ENCODE measurements at regions of chr4 and their contacts with region 1.

Region 1: DNA sequence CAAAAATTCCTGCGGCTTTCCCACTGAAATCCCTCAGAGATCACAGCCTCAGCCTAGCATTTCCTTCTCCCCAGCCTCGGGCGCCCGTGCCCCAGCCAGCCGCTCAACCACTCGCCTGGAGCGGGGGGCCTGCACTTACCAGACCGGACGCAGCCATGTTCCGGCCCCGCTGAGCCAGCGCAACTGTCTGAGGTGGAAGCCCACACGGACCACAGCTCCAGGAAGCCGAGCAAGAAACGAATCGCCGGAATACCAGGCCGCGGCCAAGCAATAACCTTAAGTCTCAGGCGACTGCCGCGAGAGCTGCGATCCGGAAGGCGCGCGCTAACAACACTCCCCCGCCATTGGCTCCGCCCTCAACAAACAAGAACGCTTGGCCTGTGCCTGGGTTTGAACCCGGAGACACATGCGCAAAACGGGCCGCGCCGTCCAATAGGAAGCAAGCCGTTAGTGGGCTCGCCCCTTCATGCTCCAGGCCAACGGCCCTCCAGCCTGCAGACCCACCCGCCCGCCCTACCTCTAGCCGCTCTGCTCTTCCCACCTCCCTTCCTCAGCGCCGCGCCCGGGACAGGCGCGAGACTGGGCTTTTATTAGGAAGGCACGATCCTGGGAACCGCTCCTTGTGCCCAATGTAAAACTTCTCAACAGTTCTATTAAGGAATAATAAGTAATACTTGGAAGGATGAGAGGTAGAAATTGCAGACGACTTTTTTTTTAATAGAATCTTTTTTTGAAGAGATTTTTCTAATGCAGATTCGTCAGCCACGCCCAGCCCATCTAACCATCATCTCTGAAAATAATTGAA is at the start of gene CENPC:
- DNase-seq: peak; percentile 93
- H3K4me3 ChIP-seq: peak within 1 kb of the TSS; percentile 95
- H3K27me3 ChIP-seq: no peaks in the 10 kb centered on the region
- CTCF ChIP-seq: no peak
- polyA plus RNA-seq, gene CENPC: 3.6 and 6.4 TPM in 2 replicates

Region 2: DNA sequence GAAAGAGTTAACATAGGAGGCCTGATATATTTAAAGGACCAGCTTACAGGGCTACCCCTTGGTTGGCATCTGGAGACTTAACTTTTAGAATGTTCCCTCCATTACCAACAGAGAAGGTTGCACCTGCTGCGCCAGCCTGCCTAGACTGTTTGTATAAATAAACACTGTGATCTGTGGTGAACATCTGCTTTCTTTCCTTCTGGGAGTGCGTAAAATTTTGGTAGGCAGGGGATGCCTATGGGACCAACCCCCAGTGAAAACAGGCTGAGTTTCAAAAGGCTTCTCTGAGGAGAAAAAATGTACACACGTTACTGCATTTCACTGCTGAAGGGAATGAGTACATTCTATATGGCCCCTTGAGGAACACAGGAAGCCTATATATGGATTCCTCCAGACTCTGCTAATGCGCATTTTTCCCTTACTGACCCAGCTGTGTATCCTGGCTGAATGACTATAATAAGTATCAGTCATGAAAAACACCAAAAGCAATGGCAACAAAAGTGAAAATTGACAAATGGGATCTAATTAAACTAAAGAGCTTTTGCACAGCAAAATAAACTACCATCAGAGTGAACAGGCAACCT is 13.9 kb before region 1 on chr4:
- CTCF ChIA-PET with region 1: no interaction called
- POLR2A ChIA-PET with region 1: no interaction called
- DNase-seq: no peak
- H3K4me3 ChIP-seq: no peak overlapping the region
- H3K27me3 ChIP-seq: no peaks in the 10 kb centered on the region
- CTCF ChIP-seq: no peak

Region 3: DNA sequence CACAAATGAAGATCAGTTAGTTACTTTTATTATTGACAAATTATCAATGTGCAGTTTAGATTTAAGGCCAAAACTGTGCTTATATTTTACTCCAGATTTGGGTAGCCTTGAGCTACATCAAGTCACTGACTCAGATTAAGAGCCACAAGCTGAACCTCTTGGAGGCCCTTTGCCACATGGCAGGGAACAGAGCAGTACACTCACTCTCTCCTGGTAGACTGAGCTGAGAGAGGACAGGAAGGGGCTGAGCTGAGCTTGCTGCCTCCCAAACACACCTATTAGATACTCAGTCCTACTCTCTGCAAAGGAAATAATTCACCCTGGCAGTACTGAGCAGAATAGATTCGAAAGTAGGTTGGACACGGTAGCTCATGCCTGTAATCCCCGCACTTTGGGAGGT is 20.9 kb after region 1 on chr4:
- CTCF ChIA-PET with region 1: no interaction called
- POLR2A ChIA-PET with region 1: no interaction called
- DNase-seq: no peak
- H3K4me3 ChIP-seq: no peak overlapping the region
- H3K27me3 ChIP-seq: 0 out of 2 replicates have a peak, but pooled peaks cover 1% of the 10 kb centered on the region
- CTCF ChIP-seq: no peak

Region 4: DNA sequence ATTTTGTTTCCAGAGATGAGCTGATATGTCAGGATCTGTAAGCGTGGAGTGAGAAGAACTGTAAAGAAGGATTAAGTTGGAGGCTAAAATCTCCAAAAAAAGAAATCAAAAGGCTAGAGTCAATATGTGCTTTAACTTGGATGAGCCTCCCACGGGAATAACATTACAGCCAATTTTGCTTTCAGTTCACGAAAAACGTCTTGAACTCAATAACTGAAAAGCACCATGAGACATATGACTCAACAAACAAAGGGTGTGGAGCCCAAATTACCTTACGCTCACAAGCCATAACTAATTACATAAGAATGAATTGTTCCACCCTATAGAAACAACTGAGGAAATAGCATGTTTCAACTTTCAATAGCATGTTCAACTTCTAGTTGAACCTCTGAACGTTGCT is 316.1 kb after region 1 on chr4:
- CTCF ChIA-PET with region 1: no interaction called
- POLR2A ChIA-PET with region 1: interaction called, 13 read pairs
- DNase-seq: no peak
- H3K4me3 ChIP-seq: no peak overlapping the region
- H3K27me3 ChIP-seq: no peaks in the 10 kb centered on the region; the same call in 1 of the 2 replicates
- CTCF ChIP-seq: no peak

Measured in BJ (cell line).